Activated naive CD4-positive, alpha-beta T cell treated with anti-CD3 and anti-CD28 coated beads, Interleukin-2, amount 10 ng/mL, durations not matched to agents 7 days and 5 days (primary cell): ENCODE measurements at regions of chr3 and their contacts with region 1.

Region 1: GRCh38 chr3:111989061-111989678 is 9.6 kb upstream of the TAGLN3 start:
- DNase-seq: no peak
- H3K4me3 Mint-ChIP-seq: no peak overlapping the region
- H3K27ac Mint-ChIP-seq: no peak overlapping the region
- H3K4me1 Mint-ChIP-seq: peaks cover 23% of the 10 kb centered on the region
- H3K27me3 Mint-ChIP-seq: no peaks in the 10 kb centered on the region

Region 2: DNA sequence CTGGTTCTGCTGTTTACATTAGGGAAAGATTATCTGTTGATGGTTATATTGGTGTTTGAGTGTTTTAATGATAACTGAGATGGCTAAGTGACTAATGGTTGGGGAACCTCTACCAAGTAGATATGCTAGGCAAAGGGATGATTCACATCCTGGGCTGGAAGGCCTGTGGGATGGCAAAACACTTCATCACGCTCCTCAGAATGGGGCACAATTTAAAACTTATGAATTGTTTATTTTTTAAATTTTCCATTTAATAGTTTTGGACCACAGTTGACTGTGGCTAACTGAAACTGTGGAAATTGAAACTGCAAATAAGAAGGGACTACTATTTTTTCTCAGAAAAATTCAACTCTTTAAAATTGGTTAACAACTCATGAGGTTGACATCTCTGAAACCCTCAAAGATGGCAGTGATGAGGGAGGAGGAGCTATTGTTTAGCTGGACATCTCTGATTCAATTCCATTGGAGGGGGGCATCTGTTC is 293.5 kb before region 1 on chr3:
- CTCF ChIA-PET with region 1: no interaction called
- DNase-seq: no peak
- H3K4me3 Mint-ChIP-seq: no peak overlapping the region
- H3K27ac Mint-ChIP-seq: no peak overlapping the region
- H3K4me1 Mint-ChIP-seq: peaks cover 33% of the 10 kb centered on the region
- H3K27me3 Mint-ChIP-seq: no peaks in the 10 kb centered on the region

Region 3: DNA sequence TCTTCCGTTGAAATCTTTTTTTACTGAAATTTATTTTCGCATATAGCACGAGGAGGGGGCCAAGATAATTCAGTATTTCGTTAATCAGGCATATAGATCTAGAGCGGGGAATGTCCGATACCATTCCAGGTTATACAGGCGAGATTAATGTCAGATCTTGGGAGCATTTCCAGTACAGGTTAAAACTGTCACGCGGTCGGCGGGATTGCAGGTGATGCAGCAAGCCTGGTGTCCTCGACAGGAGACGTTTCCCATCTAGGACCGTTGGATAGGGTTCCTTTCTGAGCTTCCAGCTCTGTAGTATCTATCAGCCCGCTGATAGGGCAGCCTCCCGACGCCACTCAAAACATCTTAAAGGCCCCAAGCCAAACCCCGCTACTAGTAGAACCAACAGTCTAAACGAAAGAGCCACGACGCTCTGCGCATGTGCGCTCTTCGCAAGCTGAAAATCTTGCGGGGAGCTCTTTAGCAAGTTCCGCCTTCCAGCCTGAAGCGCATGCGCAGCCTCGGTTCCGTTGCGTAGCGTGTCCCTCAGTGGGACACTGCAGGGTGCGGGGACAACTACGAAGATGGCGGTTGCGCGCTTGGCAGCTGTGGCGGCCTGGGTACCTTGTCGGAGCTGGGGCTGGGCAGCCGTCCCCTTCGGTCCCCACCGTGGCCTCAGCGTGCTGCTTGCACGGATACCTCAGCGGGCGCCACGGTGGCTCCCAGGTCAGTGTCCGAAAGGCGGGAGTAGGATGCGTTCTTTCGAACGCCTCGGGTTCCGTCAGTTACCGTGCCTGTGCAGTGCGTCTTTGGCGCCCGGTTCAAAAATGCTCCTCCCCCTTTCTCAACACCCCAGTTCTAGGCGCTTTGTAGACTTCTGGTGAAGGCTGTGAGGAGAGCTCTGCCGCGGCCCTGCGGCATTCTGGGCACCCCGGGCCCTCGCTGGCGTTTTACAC is 10.4 kb before region 1 on chr3 and contains the start of gene ABHD10:
- CTCF ChIA-PET with region 1: interaction called, 30 read pairs
- DNase-seq: peak; percentile 98
- H3K4me3 Mint-ChIP-seq: peak within 1 kb of the TSS; percentile 87
- H3K27ac Mint-ChIP-seq: peak within 1 kb of the TSS; percentile 96
- H3K4me1 Mint-ChIP-seq: peaks cover 41% of the 10 kb centered on the region
- H3K27me3 Mint-ChIP-seq: peaks cover 12% of the 10 kb centered on the region

Region 4: GRCh38 chr3:112007633-112008032 is 18.5 kb after region 1 on chr3:
- CTCF ChIA-PET with region 1: interaction called, 137 read pairs
- DNase-seq: no peak
- H3K4me3 Mint-ChIP-seq: no peak overlapping the region
- H3K27ac Mint-ChIP-seq: no peak overlapping the region
- H3K4me1 Mint-ChIP-seq: peaks cover 14% of the 10 kb centered on the region
- H3K27me3 Mint-ChIP-seq: no peaks in the 10 kb centered on the region

Region 5: DNA sequence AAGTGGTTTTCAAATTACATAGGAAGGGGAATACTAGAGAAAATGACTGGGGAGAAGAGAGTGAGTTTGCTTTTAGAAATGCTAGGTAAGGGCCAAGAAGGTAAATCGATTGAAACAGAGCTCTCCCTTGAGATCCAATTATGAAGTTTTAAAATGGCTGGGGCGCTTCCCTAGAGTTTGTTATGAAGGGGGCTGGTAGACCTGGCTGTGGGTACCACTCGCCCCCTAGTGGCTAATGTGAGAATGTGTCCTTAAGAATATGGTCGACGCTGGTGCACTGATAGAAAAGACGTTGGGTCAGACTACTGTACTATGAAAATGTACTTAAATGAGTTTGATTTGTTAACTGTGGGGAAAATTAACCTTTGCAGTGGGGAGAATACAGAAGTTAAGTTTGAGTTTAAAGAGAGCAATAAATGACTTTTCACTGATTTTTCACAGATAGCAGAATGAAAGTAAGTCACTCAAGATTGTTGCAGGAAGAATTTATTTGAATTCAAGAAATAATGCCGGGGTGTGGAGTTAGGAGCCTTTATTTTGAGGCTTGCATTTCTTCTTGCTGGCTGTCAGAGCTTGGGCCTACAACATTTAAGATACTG is 54.5 kb after region 1 on chr3:
- CTCF ChIA-PET with region 1: interaction called, 13 read pairs
- DNase-seq: peak; percentile 54
- H3K4me3 Mint-ChIP-seq: no peak overlapping the region
- H3K27ac Mint-ChIP-seq: no peak overlapping the region
- H3K4me1 Mint-ChIP-seq: no peaks in the 10 kb centered on the region
- H3K27me3 Mint-ChIP-seq: peaks cover 4% of the 10 kb centered on the region